HepG2 (cell line): ENCODE measurements at regions of chr6 and their contacts with region 1.

Region 1: DNA sequence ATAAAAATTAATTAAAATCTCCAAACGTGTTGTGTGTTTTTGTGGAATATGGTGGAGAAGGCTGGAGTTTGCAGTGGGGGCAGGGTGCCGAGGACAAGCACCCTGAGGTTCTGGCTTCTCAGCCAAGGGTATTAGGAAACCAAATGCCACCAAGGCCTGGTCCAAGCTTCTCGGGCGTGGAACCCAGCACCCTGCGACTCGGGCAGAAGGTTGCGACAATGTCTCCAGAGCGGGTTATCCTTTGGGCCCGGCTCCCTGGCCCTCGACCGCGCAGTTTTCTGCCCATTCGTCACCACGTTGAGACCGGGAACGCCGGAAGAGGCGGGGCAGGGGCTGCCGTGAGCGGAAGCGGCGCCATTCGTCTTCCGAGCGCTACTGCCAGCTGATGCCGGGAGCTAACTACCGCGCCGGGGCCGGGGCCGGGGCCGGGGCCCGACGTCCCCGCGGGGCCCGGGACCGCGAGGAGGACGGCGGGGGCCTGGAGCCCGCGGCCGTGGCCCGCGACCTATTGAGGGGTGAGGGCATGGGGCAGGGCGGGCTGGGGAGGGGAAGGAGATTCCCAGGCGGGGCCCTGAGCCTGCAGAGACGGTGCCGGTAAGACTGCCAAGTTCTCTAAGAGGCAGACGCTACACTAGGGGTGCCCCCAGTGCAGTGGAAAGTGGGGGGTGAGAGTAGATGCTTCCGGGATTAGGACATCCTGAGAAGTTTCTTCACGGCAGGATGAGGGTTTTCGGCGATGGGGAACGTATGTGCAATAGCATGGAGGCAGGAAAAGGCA is at the start of gene RRP36:
- DNase-seq: peak; percentile 74
- ATAC-seq: peak; percentile 96
- H3K4me3 ChIP-seq: peak within 1 kb of the TSS; percentile 100
- H3K27ac ChIP-seq: peak within 1 kb of the TSS; percentile 77
- H3K4me1 ChIP-seq: peaks cover 30% of the 10 kb centered on the region
- H3K27me3 ChIP-seq: peaks cover 0 to 3% of the 10 kb centered on the region in 2 experiments; a peak in 1 of 5 replicates
- CTCF ChIP-seq: 0 out of 2 replicates have a peak, but pooled peaks have one; percentile 10
- EP300 ChIP-seq: no peak
- POLR2A ChIP-seq: peak; percentile 83 to 87
- RAD21 ChIP-seq: peak; percentile 48; the same call in 1 of the 2 replicates
- total RNA-seq, gene RRP36: 144 and 184 TPM in 2 replicates

Region 2: GRCh38 chr6:43035495-43036194 is 14.2 kb after region 1 on chr6:
- CTCF ChIA-PET with region 1: no interaction called
- POLR2A ChIA-PET with region 1: interaction called, 41 read pairs
- in situ Hi-C with region 1: no loop called
- intact Hi-C with region 1: no loop called
- DNase-seq: no peak
- ATAC-seq: peak; percentile 86
- H3K4me3 ChIP-seq: peak overlapping the region in 1 of 3 experiments; percentile 3; a peak in 1 of 6 replicates
- H3K27ac ChIP-seq: peak overlapping the region; percentile 39
- H3K4me1 ChIP-seq: peaks cover 12% of the 10 kb centered on the region
- H3K27me3 ChIP-seq: no peaks in the 10 kb centered on the region
- CTCF ChIP-seq: no peak
- EP300 ChIP-seq: no peak
- POLR2A ChIP-seq: peak in 1 of 2 experiments; percentile 16; a peak in 1 of 4 replicates
- RAD21 ChIP-seq: no peak